Activated T-helper 1 cell treated with anti-CD3 and anti-CD28 coated beads, Interleukin-12 subunit alpha, Interleukin-12 subunit beta, Interleukin-2, Interleukin-4 antibody, amounts not matched to agents 30 ng/mL and 10 ng/mL and 1 ng/mL, durations not matched to agents 14 hours and 24 hours and 36 hours (primary cell): ENCODE measurements at regions of chr1 and their contacts with region 1.

Region 1: GRCh38 chr1:248906009-248906752 is at the start of gene PGBD2:
- DNase-seq: peak; percentile 89
- H3K4me3 Mint-ChIP-seq: peak within 1 kb of the TSS; percentile 95
- H3K27ac Mint-ChIP-seq: peak within 1 kb of the TSS; percentile 98
- H3K4me1 Mint-ChIP-seq: peaks cover 51% of the 10 kb centered on the region
- H3K27me3 Mint-ChIP-seq: peaks cover 20% of the 10 kb centered on the region
- total RNA-seq, gene PGBD2: 7.2 and 8.4 TPM in 2 replicates

Region 2: GRCh38 chr1:248359415-248359814 is 546.8 kb before region 1 on chr1:
- intact Hi-C with region 1: no loop called
- DNase-seq: no peak
- H3K4me3 Mint-ChIP-seq: no peak overlapping the region
- H3K27ac Mint-ChIP-seq: no peak overlapping the region
- H3K4me1 Mint-ChIP-seq: no peaks in the 10 kb centered on the region
- H3K27me3 Mint-ChIP-seq: no peaks in the 10 kb centered on the region

Region 3: GRCh38 chr1:248686815-248687214 is 219.4 kb before region 1 on chr1:
- intact Hi-C with region 1: no loop called
- DNase-seq: no peak
- H3K4me3 Mint-ChIP-seq: no peak overlapping the region
- H3K27ac Mint-ChIP-seq: no peak overlapping the region
- H3K4me1 Mint-ChIP-seq: peaks cover 5% of the 10 kb centered on the region
- H3K27me3 Mint-ChIP-seq: no peaks in the 10 kb centered on the region

Region 4: GRCh38 chr1:248807067-248807737 is 99.0 kb before region 1 on chr1:
- intact Hi-C with region 1: no loop called
- DNase-seq: peak; percentile 25
- H3K4me3 Mint-ChIP-seq: no peak overlapping the region
- H3K27ac Mint-ChIP-seq: no peak overlapping the region
- H3K4me1 Mint-ChIP-seq: peaks cover 10% of the 10 kb centered on the region
- H3K27me3 Mint-ChIP-seq: no peaks in the 10 kb centered on the region

Region 5: DNA sequence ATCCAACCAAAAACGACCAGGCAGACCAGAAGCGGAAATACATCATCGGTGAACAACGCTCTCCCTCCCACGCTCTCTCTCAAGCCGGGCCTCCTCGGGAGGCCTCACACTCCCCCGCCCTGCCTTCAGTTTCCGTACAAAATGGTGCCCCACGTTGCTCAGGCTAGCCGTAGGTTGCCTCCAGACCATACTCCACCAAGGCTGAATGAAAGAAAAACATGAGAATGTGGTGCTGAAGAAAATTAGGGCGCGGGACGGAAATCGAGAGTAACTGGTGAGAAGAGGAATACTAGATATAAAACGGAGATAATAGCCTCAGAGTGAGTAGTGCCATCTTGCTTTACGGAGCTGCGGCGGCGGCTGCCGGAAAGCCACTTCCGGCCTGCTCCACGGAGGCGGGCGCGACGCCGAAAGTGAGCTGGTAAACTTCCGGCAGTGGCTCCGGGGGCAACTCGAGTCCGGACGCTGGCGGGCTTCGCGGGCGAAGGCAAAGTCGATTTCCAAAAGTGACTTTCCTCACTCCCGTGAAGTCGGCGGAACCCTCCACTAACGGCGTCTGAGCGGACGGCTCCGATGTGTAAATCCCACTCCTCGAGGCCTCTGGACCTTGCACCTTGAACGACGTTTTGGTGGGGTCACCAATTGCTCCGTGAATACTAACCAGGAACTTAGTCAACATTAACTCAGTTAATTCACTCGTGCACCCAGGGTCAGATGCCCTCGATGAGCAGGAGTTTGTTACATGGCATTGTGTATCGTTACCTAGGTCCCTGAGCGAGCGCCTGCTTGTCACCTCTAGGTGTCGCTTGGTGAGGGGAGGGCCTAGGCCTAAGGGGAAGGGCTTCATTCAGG is 80.0 kb before region 1 on chr1 and contains the start of gene SH3BP5L:
- intact Hi-C with region 1: loop called (anchors 1 kb)
- DNase-seq: peak; percentile 84
- H3K4me3 Mint-ChIP-seq: peak within 1 kb of the TSS; percentile 91
- H3K27ac Mint-ChIP-seq: peak within 1 kb of the TSS; percentile 100
- H3K4me1 Mint-ChIP-seq: peaks cover 44% of the 10 kb centered on the region
- H3K27me3 Mint-ChIP-seq: peaks cover 2% of the 10 kb centered on the region
- total RNA-seq, gene SH3BP5L: 29.0 and 30.9 TPM in 2 replicates

Region 6: GRCh38 chr1:248837794-248838356 is 68.3 kb before region 1 on chr1 and contains the start of gene ZNF672:
- intact Hi-C with region 1: loop called (anchors 1 kb)
- DNase-seq: peak; percentile 95
- H3K4me3 Mint-ChIP-seq: no peak within 1 kb of the TSS
- H3K27ac Mint-ChIP-seq: peak within 1 kb of the TSS; percentile 93
- H3K4me1 Mint-ChIP-seq: peaks cover 15% of the 10 kb centered on the region
- H3K27me3 Mint-ChIP-seq: peaks cover 2% of the 10 kb centered on the region
- total RNA-seq, gene ZNF672: 42.3 and 45.2 TPM in 2 replicates

Region 7: DNA sequence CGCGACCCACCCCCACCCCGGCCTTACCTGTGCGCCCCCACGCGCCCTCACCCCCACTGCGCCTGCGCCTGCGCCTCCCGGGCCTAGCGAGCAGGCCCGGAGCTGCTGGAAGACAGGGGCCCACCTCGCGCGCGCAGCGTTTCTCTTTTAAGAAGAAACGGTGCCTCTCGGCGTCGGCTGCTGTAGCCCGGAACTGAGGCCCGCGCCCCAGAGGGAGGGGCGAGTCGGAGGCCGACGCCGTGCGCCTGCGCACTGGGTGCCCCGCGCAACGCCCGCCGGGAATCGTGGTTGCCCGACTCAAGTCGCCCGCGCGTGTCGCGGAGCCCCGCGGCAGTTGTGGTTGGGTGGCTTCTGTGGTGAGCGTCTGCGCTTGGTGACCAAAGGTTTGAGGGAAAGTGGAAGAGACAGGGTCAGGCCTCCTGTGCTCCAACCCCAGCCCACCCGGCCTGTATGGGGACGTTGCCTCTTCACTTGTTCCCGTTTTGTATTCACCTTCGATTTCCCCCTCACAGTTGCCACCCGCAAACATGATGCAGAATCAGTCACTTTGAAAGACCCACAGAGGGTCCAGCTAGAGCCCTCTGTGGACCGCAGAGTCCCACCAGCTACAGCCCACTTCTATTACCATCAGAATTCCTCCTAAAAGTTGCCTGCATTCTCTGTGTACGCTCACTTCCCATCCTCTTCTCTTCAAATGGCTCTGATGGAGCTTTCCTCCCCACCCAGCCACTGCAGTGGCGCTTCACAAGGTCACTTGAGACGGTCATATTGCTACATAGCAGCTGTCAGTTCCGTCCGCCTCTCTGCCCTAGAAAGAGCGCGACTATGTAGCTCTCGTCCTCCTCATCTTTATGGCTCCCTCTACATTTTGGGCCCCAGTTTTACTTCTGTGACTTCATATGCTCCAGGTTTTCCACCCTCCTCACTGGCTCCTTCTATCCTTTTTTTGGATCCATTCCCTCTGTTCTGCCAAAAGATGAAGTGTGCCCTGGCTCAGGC is 47.0 kb before region 1 on chr1 and contains the start of gene ZNF692:
- intact Hi-C with region 1: loop called (anchors 1 kb)
- DNase-seq: peak; percentile 97
- H3K4me3 Mint-ChIP-seq: peak within 1 kb of the TSS; percentile 96
- H3K27ac Mint-ChIP-seq: peak within 1 kb of the TSS; percentile 97
- H3K4me1 Mint-ChIP-seq: peaks cover 37% of the 10 kb centered on the region
- H3K27me3 Mint-ChIP-seq: no peaks in the 10 kb centered on the region
- total RNA-seq, gene ZNF692: 89.6 and 91.0 TPM in 2 replicates

Region 8: GRCh38 chr1:248873409-248873992 is 32.7 kb before region 1 on chr1:
- intact Hi-C with region 1: loop called (anchors 1 kb)
- DNase-seq: peak; percentile 87
- H3K4me3 Mint-ChIP-seq: peak overlapping the region; percentile 87
- H3K27ac Mint-ChIP-seq: peak overlapping the region; percentile 95
- H3K4me1 Mint-ChIP-seq: peaks cover 26% of the 10 kb centered on the region
- H3K27me3 Mint-ChIP-seq: peaks cover 16% of the 10 kb centered on the region

Region 9: DNA sequence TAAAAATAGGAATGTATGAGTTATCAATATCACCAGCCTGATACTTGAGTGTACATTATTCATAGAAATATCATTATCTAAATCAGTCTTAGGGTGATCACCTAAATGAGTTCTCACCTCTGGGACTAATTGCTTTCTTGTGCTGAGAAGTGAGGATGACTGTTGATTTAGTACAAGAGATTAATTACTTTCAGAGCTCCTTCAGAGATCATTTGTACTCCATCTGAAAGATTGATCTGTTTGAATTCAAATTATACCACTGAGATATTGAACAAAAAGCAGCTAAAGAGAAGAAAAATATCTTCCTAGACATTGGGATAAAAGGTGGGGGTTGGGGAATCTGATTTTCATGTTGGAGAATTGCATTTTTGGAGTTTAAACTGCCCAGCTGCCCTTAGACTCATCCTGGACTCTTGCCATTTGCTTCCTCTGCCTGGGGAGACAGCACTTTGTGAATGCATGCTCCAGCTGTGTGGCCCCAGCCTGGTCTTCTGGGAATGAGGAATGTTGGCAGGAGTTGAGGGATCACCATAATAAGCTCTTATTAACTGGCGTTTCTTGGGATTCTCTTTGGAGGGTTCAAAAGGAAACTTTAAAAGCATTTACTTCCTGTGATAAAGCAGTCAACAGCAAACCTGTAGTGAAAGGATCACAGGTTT is 19.8 kb before region 1 on chr1:
- intact Hi-C with region 1: no loop called
- DNase-seq: no peak
- H3K4me3 Mint-ChIP-seq: no peak overlapping the region
- H3K27ac Mint-ChIP-seq: no peak overlapping the region
- H3K4me1 Mint-ChIP-seq: no peaks in the 10 kb centered on the region
- H3K27me3 Mint-ChIP-seq: peaks cover 18% of the 10 kb centered on the region

Region 10: GRCh38 chr1:248924696-248925532 is 18.7 kb after region 1 on chr1:
- intact Hi-C with region 1: loop called (anchors 1 kb)
- DNase-seq: peak; percentile 34
- H3K4me3 Mint-ChIP-seq: peak overlapping the region; percentile 9
- H3K27ac Mint-ChIP-seq: peak overlapping the region; percentile 31
- H3K4me1 Mint-ChIP-seq: peaks cover 38% of the 10 kb centered on the region
- H3K27me3 Mint-ChIP-seq: peaks cover 10% of the 10 kb centered on the region